ENCODE measurements at regions of chr1 and their contacts with region 1.

Region 1: GRCh38 chr1:165914136-165914798 is 86.9 kb downstream of the UCK2 start:
- DNase-seq: peak in 4 of 10 donors; percentile 58 to 70 (median 62)

Region 2: GRCh38 chr1:165383067-165383466 is 531.2 kb before region 1 on chr1:
- intact Hi-C with region 1: loop called (anchors 10 kb)
- DNase-seq: peak in 8 of 10 donors; percentile 21 to 91 (median 35)

Region 3: GRCh38 chr1:165597883-165598675 is 316.2 kb before region 1 on chr1:
- intact Hi-C with region 1: loop called (anchors 1 kb)
- DNase-seq: peak; percentile 91 to 99 (median 97)

Region 4: DNA sequence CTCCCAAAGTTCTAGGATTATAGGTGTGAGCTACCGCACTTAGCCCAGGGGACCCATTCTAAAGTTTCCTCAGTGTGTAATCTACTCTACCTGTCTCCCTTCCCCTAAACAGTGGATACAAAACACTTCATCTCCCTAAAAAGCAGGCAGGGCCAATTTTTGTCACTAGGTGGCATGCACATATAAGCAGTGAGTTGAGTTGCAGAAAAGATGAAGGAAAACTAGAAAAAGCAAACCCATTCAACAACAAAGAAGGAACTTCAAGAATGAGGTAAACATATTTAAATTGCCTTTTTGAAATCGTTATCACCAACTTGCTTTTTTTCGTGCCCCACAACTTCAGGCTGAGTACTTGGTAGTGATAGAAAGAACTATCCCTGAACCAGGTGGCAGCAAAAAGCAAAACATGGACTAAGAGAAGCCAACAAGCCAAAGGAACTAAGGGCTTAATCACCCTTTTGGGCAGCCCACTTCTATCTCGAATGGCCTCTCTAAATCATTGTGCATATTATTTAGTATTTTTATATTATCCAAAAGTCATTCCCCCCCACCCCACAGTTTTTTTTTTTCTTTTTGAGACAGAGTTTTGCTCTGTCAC is 196.2 kb before region 1 on chr1:
- intact Hi-C with region 1: loop called (anchors 1 kb)
- DNase-seq: peak in 4 of 10 donors; percentile 24 to 52 (median 40)

Region 5: DNA sequence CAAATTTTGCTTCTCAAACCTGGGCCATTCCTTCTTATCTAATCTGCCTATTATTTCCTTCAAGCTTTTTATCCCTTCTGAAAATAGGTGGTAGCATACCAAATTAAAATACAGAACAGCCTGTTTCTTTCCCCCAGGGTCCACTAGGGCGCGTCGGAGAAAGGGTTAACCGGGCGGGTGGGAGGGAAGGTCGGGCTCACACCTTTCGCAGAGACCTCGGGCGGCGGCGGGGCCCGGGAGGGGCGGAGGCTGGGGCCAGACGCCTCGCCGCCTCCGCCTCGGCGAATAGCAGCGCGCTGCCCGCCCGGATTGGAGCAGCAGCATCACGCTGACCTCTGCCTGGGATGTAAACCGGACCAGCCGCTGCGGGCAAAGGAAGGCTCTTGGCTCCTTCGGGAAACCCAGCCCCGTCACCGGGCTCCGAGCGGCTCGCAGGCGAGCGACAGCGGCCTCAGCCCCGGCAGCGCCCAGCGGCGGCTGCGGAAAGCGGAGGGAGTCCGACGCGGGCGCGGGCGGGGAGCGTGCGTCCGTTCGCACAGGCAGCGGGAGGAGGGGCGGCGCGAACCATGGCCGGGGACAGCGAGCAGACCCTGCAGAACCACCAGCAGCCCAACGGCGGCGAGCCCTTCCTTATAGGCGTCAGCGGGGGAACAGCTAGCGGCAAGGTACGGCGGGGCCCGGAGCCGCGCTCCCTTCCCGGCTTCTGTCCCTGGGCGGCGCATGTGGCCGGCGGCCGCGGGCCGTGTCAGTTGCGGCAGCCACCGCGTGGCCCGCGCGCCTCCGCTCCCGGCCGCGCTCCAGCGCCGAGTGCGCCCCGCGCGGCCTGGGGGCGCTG is 86.8 kb before region 1 on chr1 and contains the start of gene UCK2:
- intact Hi-C with region 1: loop called (anchors 5 kb)
- DNase-seq: peak; percentile 58 to 95 (median 74)

Region 6: GRCh38 chr1:165994107-165994506 is 79.8 kb after region 1 on chr1:
- intact Hi-C with region 1: no loop called
- DNase-seq: no peak

Region 7: DNA sequence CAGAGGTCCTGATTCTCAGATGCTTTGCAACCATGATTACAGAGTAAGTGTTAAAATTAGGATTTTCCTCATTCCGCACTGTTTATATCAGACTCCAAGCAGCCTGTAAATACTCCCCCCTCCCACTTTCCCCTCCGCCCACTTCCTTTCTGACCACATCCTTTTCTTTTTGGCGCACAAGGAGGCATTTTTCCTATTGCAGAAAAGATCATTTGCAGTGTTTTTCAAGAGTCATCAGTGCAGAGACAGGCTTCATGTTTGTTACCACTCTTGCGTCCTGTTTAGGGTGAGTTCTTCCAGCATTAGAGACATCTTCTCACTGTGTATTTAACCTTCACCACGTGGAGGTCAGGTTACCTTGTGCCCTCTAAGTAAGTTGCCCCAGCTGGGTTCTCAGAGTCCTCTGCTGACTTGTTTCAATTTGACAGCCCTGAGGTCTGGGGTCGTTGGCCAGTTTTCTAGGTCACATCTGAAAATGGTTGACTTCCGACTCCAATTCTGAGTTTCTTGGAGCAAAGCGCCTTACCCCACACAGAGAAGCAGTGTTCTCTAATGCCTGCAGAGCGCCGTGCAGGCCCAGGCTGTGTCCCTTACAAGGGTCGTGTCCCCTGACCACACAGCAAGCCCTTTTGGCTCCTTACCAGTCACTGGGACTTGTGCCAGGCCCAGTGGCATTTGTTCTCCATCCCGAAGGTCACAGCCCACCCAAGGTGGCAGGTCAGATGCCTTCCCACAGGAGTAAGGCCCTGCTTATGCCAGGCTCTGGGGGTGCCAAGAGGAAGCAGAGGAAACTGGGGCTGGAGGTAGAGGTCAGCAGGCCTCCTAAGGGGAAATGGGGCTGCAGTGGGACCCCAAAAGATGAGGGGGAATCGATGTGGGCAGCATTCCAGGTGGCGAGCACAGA is 167.0 kb after region 1 on chr1:
- intact Hi-C with region 1: no loop called
- DNase-seq: no peak

Region 8: GRCh38 chr1:166822385-166822784 is 908.1 kb after region 1 on chr1:
- intact Hi-C with region 1: no loop called
- DNase-seq: no peak